ENCODE measurements at regions of chr17 and their contacts with region 1.

Region 1: DNA sequence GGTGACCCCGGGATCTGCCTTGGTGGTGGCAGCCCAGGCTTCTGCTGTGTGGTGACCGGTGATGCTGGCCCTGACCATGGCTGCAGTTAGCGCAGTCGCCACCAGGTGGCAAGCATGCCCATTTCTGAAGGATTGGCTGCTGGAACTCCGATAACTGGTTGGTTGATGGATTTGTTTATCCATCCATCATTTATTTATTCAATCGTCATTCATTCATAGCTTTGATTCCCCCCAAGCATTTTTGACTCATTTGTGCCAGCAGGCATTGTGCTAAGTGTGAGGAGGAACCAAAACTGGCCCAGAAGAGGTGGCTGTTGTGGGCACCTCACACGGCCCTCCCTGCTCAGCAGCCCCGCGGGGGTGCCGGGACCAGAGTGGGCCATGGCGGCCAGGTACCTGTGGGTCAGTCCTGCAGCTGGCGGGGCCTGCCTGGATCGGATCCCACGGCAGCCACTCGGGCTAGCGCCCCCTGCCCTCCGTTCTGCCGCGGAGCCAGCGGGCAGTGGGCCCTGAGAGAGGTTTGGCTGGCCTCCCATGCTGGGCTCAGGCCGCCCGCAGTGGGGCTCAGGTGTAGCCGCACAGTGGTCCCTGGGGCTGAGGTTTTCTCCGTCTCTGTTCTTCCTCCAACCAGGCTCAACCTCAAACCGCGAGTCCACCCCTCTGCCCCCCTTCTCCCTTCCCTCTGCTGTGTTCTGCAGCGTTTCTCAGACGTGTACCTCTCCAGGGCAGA is 28.8 kb upstream of the ITGA3 start:
- DNase-seq: peak; percentile 91 to 95
- ATAC-seq: peak; percentile 48 to 76
- H3K4me3 ChIP-seq: peak overlapping the region; percentile 46
- H3K27ac ChIP-seq: peak overlapping the region; percentile 94 to 99
- H3K4me1 ChIP-seq: peaks cover 42% of the 10 kb centered on the region
- CTCF ChIP-seq: peak; percentile 97
- EP300 ChIP-seq: no peak
- POLR2A ChIP-seq: no peak
- RAD21 ChIP-seq: peak; percentile 98

Region 2: DNA sequence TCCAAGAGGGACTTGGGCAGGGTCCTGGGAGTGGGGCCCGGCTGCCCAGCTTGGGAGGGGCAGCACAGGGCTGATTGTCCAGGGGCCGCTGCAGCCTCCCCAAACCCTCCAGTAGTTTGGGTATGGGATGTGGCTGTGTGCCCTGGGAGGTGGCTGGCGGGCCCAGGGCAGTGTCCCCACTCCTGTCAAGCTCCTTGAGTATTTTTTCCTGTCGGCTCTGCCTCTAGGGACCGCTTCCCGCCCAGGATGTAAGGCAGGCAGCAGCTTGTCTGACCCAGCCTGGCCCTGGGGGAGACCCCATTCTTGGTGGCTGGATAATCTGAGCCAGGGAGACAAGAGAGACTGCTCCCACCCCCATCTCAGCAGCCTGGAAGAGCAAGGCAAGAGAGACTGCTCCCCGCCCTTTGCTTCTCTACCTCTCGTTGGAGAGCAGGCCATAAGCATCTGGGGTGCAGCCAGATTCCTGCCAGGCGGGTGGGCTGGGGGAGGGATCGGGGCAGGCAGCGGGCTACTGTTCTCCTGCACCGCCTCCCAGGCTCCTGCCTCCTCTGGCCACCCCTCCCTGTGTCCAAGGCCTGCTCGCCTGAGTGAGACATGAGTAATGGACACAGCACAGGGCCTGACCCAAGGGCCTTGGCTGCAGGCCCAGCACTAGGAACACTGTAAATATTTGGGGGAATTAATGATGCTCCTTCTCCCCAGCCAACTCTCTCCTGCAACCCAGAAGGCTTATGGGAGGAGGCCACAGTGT is 10.4 kb after region 1 on chr17:
- CTCF ChIA-PET with region 1: interaction called, 92 read pairs
- POLR2A ChIA-PET with region 1: interaction called, 3 read pairs
- DNase-seq: peak in 1 of 2 experiments; percentile 77
- ATAC-seq: peak; percentile 85 to 94
- H3K4me3 ChIP-seq: no peak overlapping the region
- H3K27ac ChIP-seq: peak overlapping the region; percentile 82 to 88
- H3K4me1 ChIP-seq: peaks cover 43% of the 10 kb centered on the region
- CTCF ChIP-seq: no peak
- EP300 ChIP-seq: peak in 1 of 2 experiments; percentile 46; a peak in 1 of 5 replicates
- POLR2A ChIP-seq: no peak
- RAD21 ChIP-seq: 0 out of 5 replicates have a peak, but pooled peaks have one; percentile 16 to 22

Region 3: GRCh38 chr17:50055426-50056230 is 28.6 kb after region 1 on chr17 and contains the start of gene ITGA3:
- CTCF ChIA-PET with region 1: interaction called, 473 read pairs
- POLR2A ChIA-PET with region 1: interaction called, 140 read pairs
- DNase-seq: peak; percentile 93 to 96
- ATAC-seq: peak; percentile 57 to 73
- H3K4me3 ChIP-seq: peak within 1 kb of the TSS; percentile 77
- H3K27ac ChIP-seq: peak within 1 kb of the TSS; percentile 92 to 97
- H3K4me1 ChIP-seq: peaks cover 74% of the 10 kb centered on the region
- CTCF ChIP-seq: no peak
- EP300 ChIP-seq: 0 out of 5 replicates have a peak, but pooled peaks of 1 of the 2 experiments have one; percentile 15
- POLR2A ChIP-seq: peak; percentile 95
- RAD21 ChIP-seq: peak; percentile 2 to 35; a peak in 1 of 5 replicates
- polyA plus RNA-seq, gene ITGA3: 141 and 181 TPM in 2 replicates

Region 4: GRCh38 chr17:50079334-50080095 is 52.4 kb after region 1 on chr17:
- CTCF ChIA-PET with region 1: interaction called, 177 read pairs
- POLR2A ChIA-PET with region 1: interaction called, 8 read pairs
- DNase-seq: peak; percentile 79 to 87
- ATAC-seq: peak; percentile 73 to 88
- H3K4me3 ChIP-seq: no peak overlapping the region
- H3K27ac ChIP-seq: peak overlapping the region in 1 of 2 experiments; percentile 71; a peak in 3 of 6 replicates
- H3K4me1 ChIP-seq: peaks cover 12% of the 10 kb centered on the region; the same call in 2 of the 3 replicates
- CTCF ChIP-seq: peak; percentile 97
- EP300 ChIP-seq: no peak
- POLR2A ChIP-seq: no peak
- RAD21 ChIP-seq: peak; percentile 76 to 77

Region 5: DNA sequence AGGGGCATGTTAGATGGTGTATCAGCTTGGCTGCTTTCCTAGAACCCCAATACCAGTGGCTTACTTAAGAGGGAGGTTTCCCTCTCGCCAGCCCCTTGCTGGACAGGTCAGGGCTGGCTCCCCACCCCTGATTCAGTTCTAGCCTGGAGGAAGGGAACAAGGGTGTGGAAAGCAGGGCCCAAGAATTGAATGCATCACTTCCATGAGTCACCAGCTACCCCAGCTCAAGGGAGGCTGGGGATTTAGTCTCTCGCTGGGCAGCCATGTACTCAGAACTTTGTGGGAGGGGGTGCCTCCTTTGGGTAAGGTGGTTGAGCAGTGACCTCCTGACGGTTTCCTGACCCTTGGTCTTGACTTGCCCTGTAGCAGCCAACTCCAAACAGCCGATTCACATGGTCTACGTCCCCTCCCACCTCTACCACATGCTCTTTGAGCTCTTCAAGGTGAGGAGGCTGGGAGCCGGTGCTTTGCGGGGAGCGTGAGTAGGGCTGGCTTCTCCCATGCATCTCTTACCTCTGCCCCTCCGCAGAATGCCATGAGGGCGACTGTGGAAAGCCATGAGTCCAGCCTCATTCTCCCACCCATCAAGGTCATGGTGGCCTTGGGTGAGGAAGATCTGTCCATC is 80.8 kb after region 1 on chr17:
- CTCF ChIA-PET with region 1: interaction called, 20 read pairs
- POLR2A ChIA-PET with region 1: no interaction called
- DNase-seq: no peak
- ATAC-seq: peak in 1 of 2 experiments; percentile 21; a peak in 1 of 6 replicates
- H3K4me3 ChIP-seq: no peak overlapping the region
- H3K27ac ChIP-seq: no peak overlapping the region
- H3K4me1 ChIP-seq: peaks cover 14% of the 10 kb centered on the region; the same call in 2 of the 3 replicates
- CTCF ChIP-seq: no peak
- EP300 ChIP-seq: no peak
- POLR2A ChIP-seq: no peak
- RAD21 ChIP-seq: no peak

Region 6: GRCh38 chr17:50194140-50194933 is 167.3 kb after region 1 on chr17:
- CTCF ChIA-PET with region 1: no interaction called
- POLR2A ChIA-PET with region 1: no interaction called
- DNase-seq: no peak
- ATAC-seq: no peak
- H3K4me3 ChIP-seq: no peak overlapping the region
- H3K27ac ChIP-seq: peak overlapping the region in 1 of 2 experiments; percentile 7; a peak in 1 of 6 replicates
- H3K4me1 ChIP-seq: peaks cover 34% of the 10 kb centered on the region
- CTCF ChIP-seq: no peak
- EP300 ChIP-seq: no peak
- POLR2A ChIP-seq: no peak
- RAD21 ChIP-seq: no peak

Measured in A549 (cell line).